ENCODE measurements at regions of chr11 and their contacts with region 1.

Region 1: DNA sequence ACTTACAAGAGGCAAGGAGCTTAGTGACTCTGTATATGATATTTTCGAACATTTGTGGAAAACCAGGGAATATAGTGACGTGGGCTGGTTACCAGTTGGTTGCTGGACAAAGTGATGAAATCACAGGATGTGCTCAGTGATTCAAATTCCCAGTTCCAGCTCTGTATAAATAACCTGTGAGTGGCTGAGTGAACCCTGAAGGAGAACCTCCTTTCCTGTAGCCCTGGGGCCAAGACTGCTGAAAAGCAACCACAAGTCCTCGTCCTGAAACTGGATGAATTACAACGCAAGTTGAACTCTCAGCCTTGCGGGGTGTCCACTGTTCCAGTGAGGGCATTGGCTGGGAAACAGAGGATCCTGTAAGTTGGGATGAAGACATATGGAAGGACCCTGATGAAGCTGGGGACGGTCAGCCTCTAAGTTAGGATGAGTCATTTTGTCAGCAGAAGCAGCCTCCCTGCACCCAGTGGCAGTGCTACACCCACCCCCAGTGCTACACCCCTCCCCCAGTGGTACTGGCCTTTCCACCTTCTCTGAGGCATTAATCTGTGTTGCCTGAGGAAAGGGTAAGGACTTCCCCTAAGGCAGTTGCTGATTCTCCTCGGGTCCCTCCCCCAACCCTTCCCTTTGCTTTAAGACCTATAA is 22.0 kb upstream of the CD81 start:
- DNase-seq: no peak
- H3K4me3 ChIP-seq: no peak overlapping the region
- H3K27ac ChIP-seq: no peak overlapping the region
- H3K4me1 ChIP-seq: no peaks in the 10 kb centered on the region
- H3K27me3 ChIP-seq: no peaks in the 10 kb centered on the region
- CTCF ChIP-seq: no peak
- POLR2A ChIP-seq: no peak

Region 2: GRCh38 chr11:2400069-2400760 is 45.1 kb after region 1 on chr11 and contains the start of gene TSSC4:
- intact Hi-C with region 1: no loop called
- DNase-seq: peak; percentile 98 to 100
- H3K4me3 ChIP-seq: peak within 1 kb of the TSS; percentile 85 to 100 (median 100)
- H3K27ac ChIP-seq: peak within 1 kb of the TSS; percentile 97 to 99
- H3K4me1 ChIP-seq: peaks cover 7 to 10% of the 10 kb centered on the region in 2 donors
- H3K27me3 ChIP-seq: no peaks in the 10 kb centered on the region
- CTCF ChIP-seq: peak; percentile 97 to 99 (median 98)
- POLR2A ChIP-seq: peak; percentile 89
- total RNA-seq, gene TSSC4: 36.8 to 44.9 (median 37.2) TPM

Region 3: GRCh38 chr11:3245071-3245470 is 889.9 kb after region 1 on chr11:
- intact Hi-C with region 1: loop called (anchors 10 kb)
- DNase-seq: no peak
- H3K4me3 ChIP-seq: no peak overlapping the region
- H3K27ac ChIP-seq: no peak overlapping the region
- H3K4me1 ChIP-seq: no peaks in the 10 kb centered on the region
- H3K27me3 ChIP-seq: no peaks in the 10 kb centered on the region
- CTCF ChIP-seq: no peak
- POLR2A ChIP-seq: no peak